HCT116 (cell line): ENCODE measurements at regions of chr2 and their contacts with region 1.

Region 1: GRCh38 chr2:131801210-131801744 is 273.6 kb downstream of the CCDC74A start:
- DNase-seq: no peak
- ATAC-seq: no peak
- H3K4me3 ChIP-seq: no peak overlapping the region
- H3K27ac ChIP-seq: no peak overlapping the region
- H3K4me1 ChIP-seq: peaks cover 0 to 7% of the 10 kb centered on the region in 2 experiments; a peak in 3 of 4 replicates
- H3K27me3 ChIP-seq: no peaks in the 10 kb centered on the region
- CTCF ChIP-seq: no peak
- POLR2A ChIP-seq: no peak
- RAD21 ChIP-seq: no peak

Region 2: GRCh38 chr2:131010566-131010965 is 790.7 kb before region 1 on chr2:
- CTCF ChIA-PET with region 1: no interaction called
- POLR2A ChIA-PET with region 1: no interaction called
- RAD21 ChIA-PET with region 1: no interaction called
- intact Hi-C with region 1: no loop called
- DNase-seq: no peak
- ATAC-seq: no peak
- H3K4me3 ChIP-seq: no peak overlapping the region
- H3K27ac ChIP-seq: no peak overlapping the region
- H3K4me1 ChIP-seq: no peaks in the 10 kb centered on the region
- H3K27me3 ChIP-seq: no peaks in the 10 kb centered on the region
- CTCF ChIP-seq: no peak
- POLR2A ChIP-seq: no peak
- RAD21 ChIP-seq: no peak

Region 3: DNA sequence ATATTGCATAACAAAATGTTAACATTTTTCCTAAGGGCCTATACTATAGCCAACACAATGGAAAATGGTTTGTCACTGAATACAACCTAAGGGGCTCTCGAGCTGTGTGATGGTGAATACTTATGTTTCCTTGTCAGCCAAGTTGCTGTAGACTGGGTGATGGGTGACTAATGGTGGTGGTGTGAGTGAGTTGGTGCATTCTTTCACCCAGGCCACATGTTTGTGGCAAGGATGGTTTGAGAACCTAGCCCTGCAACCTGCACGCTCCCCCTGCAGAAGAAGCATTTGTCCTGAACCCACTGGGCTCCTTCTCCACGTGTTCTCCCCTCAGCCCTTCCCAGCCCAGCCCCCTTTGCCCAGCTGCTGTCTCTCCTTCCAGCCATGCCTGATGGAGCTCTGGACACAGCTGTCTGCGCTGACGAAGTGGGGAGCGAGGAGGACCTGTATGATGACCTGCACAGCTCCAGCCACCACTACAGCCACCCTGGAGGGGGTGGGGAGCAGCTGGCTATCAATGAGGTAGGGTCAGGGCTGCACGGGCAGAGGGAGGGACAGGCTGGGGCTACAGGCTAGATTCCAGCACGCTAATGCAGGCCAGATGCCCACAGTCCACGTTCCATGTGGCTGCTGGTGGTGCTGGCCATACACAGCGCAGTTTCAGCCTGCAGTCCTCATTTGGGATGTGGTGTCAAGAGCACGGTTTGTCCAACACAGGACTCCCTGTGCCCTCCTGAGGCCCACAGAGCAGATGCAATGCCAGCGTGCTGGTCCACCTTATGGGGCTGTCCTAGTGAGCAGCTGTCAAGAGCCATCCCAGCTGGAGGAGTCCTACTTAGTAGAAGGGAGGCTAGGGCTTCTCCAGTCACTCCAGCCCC is 773.5 kb before region 1 on chr2:
- CTCF ChIA-PET with region 1: no interaction called
- POLR2A ChIA-PET with region 1: no interaction called
- RAD21 ChIA-PET with region 1: no interaction called
- intact Hi-C with region 1: no loop called
- DNase-seq: no peak
- ATAC-seq: no peak
- H3K4me3 ChIP-seq: no peak overlapping the region
- H3K27ac ChIP-seq: no peak overlapping the region
- H3K4me1 ChIP-seq: no peaks in the 10 kb centered on the region
- H3K27me3 ChIP-seq: no peaks in the 10 kb centered on the region
- CTCF ChIP-seq: no peak
- POLR2A ChIP-seq: no peak
- RAD21 ChIP-seq: no peak

Region 4: DNA sequence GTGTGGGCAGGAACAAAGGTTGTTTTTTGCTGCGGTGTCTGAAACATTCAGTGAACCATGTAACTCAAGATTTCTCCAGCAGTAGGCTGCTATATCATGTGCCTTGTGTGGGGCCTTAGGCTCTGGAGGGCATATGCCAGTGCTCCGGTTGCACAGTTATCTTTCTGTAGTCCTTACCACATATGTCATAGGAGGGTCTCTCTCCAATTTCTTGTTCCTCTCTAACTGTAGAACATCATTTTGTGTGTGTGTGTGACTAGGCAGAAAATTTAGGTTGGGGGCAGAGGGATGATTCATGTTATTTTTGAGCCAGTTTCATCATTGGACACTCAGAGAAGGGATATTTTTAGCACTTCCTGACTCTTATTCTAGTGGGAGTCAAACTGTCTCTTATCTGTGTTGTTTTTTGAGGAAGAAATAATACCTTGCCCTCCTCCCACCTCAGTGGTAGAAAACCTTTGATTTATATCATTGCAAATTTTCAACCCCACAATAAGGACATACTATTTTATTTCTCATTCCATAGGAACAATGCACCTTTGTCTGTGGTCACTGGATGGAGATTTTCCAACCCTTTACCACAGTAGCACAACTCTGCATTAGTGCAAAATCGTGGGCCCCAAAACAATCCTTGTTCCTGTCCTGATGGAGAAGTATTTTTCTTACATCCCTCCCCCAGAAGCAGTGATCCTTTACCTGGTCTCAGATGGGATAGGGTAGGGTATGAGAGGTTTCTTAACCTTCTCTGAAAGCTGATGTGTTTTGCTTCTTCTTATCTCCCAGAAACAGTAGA is 159.7 kb before region 1 on chr2:
- CTCF ChIA-PET with region 1: no interaction called
- POLR2A ChIA-PET with region 1: no interaction called
- RAD21 ChIA-PET with region 1: no interaction called
- intact Hi-C with region 1: no loop called
- DNase-seq: no peak
- ATAC-seq: no peak
- H3K4me3 ChIP-seq: no peak overlapping the region
- H3K27ac ChIP-seq: no peak overlapping the region
- H3K4me1 ChIP-seq: no peaks in the 10 kb centered on the region
- H3K27me3 ChIP-seq: 0 out of 2 replicates have a peak, but pooled peaks cover 3% of the 10 kb centered on the region
- CTCF ChIP-seq: no peak
- POLR2A ChIP-seq: no peak
- RAD21 ChIP-seq: no peak

Region 5: DNA sequence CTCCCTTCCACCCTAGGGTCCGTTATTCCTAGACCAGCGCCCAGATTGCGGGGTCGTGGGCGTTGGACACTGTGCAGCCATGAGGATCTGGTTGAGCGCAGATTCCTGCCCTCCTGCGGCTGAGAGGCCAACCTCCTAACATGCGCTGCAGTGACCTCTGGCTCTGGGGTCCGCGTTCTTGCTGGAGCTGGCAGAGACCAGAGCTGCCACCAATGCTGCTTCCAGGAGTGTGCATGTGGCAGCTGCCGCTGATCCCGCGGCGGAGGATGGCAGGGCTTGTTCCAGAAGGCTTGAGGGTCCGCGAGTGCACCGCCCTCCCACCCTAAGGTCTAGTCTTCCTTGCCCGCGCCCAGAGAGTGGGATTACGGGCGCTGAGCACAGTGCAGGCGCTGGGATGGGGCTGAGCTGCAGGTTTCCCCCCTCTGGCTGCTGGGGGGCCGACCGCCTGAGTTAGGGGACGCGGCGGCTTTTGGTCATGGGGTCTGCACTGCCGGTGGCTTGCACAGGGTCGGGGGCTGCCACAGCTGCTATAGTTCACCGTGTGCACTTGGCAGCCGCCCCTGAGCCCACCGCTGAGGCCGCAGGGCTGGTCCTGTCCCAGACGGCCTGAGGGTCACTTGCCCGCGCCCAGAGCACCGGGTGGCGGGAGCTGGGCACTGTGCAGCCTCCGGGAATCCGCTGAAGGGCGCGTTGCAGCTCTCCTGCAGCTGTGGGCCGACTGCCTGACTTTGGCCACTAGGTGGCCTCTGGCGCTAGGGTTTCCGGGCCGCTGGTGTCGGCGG is 127.7 kb before region 1 on chr2:
- CTCF ChIA-PET with region 1: interaction called, 5 read pairs
- POLR2A ChIA-PET with region 1: no interaction called
- RAD21 ChIA-PET with region 1: interaction called in 1 of 2 experiments, 3 read pairs
- intact Hi-C with region 1: loop called (anchors 2 kb)
- DNase-seq: peak; percentile 48
- ATAC-seq: peak; percentile 91
- H3K4me3 ChIP-seq: no peak overlapping the region
- H3K27ac ChIP-seq: no peak overlapping the region; the same call in 1 of the 2 replicates
- H3K4me1 ChIP-seq: peaks cover 7 to 31% of the 10 kb centered on the region in 2 experiments; a peak in 3 of 4 replicates
- H3K27me3 ChIP-seq: no peaks in the 10 kb centered on the region
- CTCF ChIP-seq: peak; percentile 76 to 92 (median 77)
- POLR2A ChIP-seq: no peak
- RAD21 ChIP-seq: peak; percentile 85